ENCODE measurements at regions of chr2 and their contacts with region 1.

Region 1: DNA sequence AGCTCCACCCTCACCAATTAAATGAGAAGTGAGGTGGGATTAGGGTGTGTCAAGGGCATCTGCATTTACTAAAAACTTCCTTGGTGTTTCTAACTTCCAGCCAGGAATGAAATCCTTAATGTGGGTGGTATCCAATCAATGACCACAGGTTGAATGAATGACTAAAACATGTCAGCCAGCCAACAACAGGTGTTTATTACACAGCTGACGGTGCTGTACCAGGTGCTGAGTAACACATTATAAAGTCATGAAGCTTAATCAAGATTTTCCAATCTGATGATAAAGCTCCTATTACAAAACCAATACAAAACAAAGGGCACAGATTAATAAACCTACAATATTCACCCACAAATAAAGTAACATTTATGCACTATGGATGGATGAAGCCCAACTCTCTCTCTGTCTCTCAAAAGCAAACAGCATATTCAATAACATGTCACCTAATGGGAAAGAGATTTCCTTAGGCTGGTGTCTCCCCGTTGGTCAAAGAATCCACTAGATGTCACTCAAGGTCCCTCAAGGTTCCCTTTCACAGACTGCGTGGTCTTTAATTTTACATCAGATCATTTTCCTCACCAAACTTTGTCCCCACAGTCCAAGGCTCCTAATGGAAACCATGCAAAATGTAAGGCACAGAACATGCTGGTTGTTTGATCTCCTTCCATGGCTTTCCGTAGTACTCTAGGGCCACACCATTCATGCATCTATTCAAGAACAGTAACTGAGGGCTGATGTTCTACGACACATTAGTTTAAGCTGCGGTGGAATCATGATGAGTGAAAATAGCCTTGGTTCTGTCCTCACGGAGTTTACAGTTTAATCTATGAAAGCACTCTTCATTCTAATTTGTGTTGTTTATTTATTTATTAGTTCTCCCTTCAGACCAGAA is 6.4 kb upstream of the PTPN4 start:
- DNase-seq: no peak
- H3K4me3 ChIP-seq: no peak overlapping the region
- H3K27me3 ChIP-seq: no peaks in the 10 kb centered on the region
- CTCF ChIP-seq: peak; percentile 67

Region 2: GRCh38 chr2:119826370-119826961 is 73.2 kb after region 1 on chr2:
- CTCF ChIA-PET with region 1: interaction called, 17 read pairs
- POLR2A ChIA-PET with region 1: no interaction called
- DNase-seq: no peak
- H3K4me3 ChIP-seq: no peak overlapping the region
- H3K27me3 ChIP-seq: no peaks in the 10 kb centered on the region
- CTCF ChIP-seq: peak; percentile 64

Measured in BJ (cell line).